Heart left ventricle (tissue), 16 donors: ENCODE measurements at regions of chr1 and their contacts with region 1.

Region 1: DNA sequence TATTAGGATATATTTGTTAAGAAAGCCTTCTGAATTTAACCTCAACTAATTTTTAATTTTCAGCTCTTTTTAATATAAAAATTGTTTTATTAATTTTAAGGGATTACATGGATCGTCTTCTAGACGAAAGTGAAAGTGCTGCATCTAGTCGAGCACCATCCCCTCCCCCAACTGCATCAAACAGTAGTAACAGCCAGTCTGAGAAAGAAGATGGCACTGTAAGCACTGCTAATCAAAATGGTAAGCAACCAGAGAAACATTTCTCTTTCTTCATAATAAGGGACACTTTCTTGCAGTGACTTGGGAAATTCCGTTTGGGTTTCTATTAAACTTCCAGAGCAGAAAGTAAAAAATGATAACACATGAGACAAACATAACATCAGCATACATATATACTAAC is 56.9 kb downstream of the MIER1 start:
- DNase-seq: peak in 3 of 5 donors; percentile 34 to 40 (median 38)
- ATAC-seq: peak in 2 of 4 donors; percentile 49 to 76
- H3K4me3 ChIP-seq: peak overlapping the region in 10 of 12 donors; percentile 3 to 57 (median 40)
- H3K27ac ChIP-seq: peak overlapping the region in 8 of 12 donors; percentile 22 to 66 (median 32)
- H3K4me1 ChIP-seq: peaks cover 0 to 28% (median 4%) of the 10 kb centered on the region in 12 donors
- H3K27me3 ChIP-seq: no peaks in the 10 kb centered on the region
- CTCF ChIP-seq: no peak
- POLR2A ChIP-seq: no peak

Region 2: DNA sequence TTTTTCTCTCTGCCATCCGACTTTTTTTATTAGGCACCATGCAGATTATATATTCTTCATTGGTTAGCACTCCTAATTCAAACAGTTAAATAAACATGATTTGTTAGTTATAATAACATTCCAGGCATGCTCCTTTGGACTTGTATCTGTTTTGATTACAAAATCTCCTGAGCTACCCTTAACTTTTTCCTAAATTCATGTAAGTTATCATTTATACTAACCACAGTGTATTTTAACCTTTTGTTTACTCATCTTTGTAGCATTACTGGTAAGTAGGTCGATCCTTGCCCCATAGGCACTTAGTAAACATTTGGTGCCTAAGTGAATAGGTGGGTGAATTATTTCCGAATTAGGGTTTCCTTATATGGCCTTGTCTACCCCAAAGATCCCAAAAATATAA is 13.1 kb before region 1 on chr1:
- intact Hi-C with region 1: loop called in 1 of 10 experiments (anchors 2 kb)
- DNase-seq: no peak
- ATAC-seq: no peak
- H3K4me3 ChIP-seq: no peak overlapping the region
- H3K27ac ChIP-seq: no peak overlapping the region
- H3K4me1 ChIP-seq: no peaks in the 10 kb centered on the region
- H3K27me3 ChIP-seq: no peaks in the 10 kb centered on the region
- CTCF ChIP-seq: no peak
- POLR2A ChIP-seq: no peak